ENCODE measurements at regions of chr15 and their contacts with region 1.

Region 1: DNA sequence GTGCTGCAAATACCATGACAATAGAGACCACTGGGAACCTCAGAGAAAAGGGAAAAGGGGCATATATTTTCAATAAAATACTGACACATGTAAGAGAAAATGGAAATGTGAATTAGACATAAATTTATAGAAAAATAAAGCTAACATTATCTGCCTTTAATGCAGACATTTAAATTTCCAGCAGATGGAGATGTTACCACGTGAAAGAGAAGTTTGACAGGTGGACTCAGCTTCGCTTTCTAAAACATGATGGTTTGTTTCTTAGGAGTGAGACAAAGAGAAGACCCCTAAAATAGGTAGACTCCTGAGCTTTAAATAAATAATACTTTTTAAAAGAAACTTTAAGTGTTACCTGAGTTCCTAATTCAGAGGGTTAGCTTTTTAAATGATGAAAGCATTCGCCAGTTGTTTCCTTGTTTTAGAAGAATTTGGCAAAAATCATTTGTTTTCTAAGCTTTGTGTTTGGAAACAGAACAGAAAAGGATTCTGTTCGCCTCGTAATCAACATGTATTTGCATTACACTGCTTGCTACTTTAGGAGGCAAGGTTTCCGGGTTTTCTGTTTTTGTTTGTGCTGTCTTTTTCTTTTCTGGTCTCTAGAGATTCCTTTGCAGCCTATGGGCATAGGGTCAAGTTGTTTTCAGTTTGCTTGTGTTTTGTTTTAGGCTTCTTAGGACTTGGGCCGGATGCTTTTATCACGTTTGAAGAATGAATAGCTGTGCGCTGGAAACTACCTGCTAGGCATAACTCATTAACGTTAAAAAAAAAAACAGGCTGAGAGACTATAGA is 271.4 kb downstream of the THSD4 start:
- DNase-seq: no peak
- H3K4me3 ChIP-seq: peak overlapping the region in 1 of 2 donors; percentile 6
- H3K27ac ChIP-seq: peak overlapping the region in 1 of 2 donors; percentile 37
- H3K4me1 ChIP-seq: peaks cover 0 to 25% (median 5%) of the 10 kb centered on the region in 4 donors
- H3K27me3 ChIP-seq: no peaks in the 10 kb centered on the region
- CTCF ChIP-seq: peak; percentile 57 to 80

Region 2: DNA sequence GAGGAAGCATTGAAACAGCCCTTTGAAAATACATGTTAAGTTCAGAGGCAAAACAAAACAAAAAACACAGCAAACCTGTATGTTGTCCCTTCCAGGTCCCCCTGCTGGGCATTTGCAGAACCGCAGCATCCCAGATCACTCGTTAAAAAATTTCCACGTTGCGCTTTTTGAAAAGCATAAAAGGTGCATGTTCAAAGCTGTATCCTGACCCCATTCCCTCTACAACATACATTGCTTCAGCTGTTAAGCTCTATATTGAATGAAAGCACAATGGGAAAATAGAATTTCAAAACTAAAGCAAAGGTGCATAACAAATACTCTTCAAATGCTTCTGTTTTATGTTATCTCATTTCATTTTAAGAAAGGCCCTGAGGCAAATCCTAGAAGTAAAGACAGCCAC is 56.9 kb after region 1 on chr15:
- intact Hi-C with region 1: loop called (anchors 5 kb)
- DNase-seq: peak in 1 of 2 donors; percentile 53
- H3K4me3 ChIP-seq: no peak overlapping the region
- H3K27ac ChIP-seq: no peak overlapping the region
- H3K4me1 ChIP-seq: peaks cover 0 to 22% (median 2%) of the 10 kb centered on the region in 4 donors
- H3K27me3 ChIP-seq: no peaks in the 10 kb centered on the region
- CTCF ChIP-seq: peak; percentile 79 to 90